ENCODE measurements at regions of chr10 and their contacts with region 1.

Region 1: GRCh38 chr10:26725837-26726727 is 28.6 kb downstream of the PDSS1 start:
- DNase-seq: peak; percentile 31 to 79 (median 70)
- ATAC-seq: peak; percentile 53 to 90 (median 90)
- H3K4me3 ChIP-seq: no peak overlapping the region
- H3K27ac ChIP-seq: no peak overlapping the region
- H3K4me1 ChIP-seq: no peaks in the 10 kb centered on the region
- H3K27me3 ChIP-seq: no peaks in the 10 kb centered on the region
- CTCF ChIP-seq: peak; percentile 57 to 75 (median 68)

Region 2: GRCh38 chr10:25831080-25831479 is 895.0 kb before region 1 on chr10:
- intact Hi-C with region 1: no loop called
- DNase-seq: no peak
- ATAC-seq: peak in 1 of 4 donors; percentile 29
- H3K4me3 ChIP-seq: no peak overlapping the region
- H3K27ac ChIP-seq: no peak overlapping the region
- H3K4me1 ChIP-seq: no peaks in the 10 kb centered on the region
- H3K27me3 ChIP-seq: peaks cover 0 to 9% (median 0%) of the 10 kb centered on the region in 4 donors
- CTCF ChIP-seq: no peak

Region 3: DNA sequence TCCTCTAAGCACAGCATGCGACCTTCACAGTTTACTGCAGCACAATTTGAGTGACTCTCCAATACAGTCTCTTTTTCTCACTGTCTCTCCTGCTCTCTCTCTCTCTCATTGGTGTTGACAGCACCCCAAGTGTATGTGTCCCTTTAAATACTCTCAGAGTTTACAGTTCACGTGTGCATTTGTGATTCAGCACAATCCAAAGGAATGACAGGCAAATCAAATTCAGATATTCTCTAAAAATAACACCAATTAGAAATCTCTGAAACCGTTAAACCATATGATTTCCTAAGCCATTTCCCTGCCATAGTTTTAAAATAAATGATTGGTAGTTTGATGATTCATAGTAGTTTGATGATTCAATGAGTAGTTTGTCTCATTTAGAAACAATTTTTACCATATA is 613.5 kb before region 1 on chr10:
- intact Hi-C with region 1: no loop called
- DNase-seq: no peak
- ATAC-seq: no peak
- H3K4me3 ChIP-seq: no peak overlapping the region
- H3K27ac ChIP-seq: no peak overlapping the region
- H3K4me1 ChIP-seq: no peaks in the 10 kb centered on the region
- H3K27me3 ChIP-seq: peaks cover 0 to 2% (median 0%) of the 10 kb centered on the region in 4 donors
- CTCF ChIP-seq: no peak

Region 4: DNA sequence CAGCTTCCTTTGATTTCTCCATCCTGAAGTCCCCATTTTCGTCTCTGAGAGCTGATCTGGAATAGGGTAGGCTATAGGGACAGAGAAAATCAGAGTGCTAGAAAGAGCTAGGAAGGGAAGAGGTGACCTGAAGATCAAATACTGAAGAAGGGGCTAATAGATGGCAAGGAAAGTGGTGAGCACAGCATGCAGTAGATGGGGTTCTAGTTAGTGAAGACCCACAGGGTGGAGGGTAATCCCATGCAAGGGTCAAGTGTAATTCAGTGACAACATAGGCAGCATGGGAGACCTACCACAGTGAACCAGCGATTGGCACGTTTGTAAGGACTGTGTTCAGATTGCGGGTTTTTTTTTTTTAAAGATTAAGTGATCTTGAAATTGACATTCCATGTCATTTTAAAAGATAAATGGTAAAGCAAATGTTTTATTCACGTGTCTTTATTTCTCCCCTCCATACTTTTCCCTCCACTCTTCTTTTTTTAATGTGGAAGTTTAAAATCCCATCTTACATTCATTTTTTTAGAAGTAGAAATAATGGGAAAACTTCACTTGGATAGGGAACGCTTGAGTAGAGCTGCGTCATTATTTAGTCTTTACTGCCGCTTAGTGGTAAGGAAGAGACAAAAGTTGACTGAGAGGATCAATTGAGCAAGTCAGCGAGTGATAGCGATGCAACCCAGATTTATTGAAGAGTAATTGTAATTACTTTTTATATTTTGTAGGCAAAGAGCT is 155.7 kb after region 1 on chr10:
- intact Hi-C with region 1: loop called (anchors 5 to 10 kb)
- DNase-seq: no peak
- ATAC-seq: peak; percentile 86 to 97 (median 94)
- H3K4me3 ChIP-seq: no peak overlapping the region
- H3K27ac ChIP-seq: no peak overlapping the region
- H3K4me1 ChIP-seq: no peaks in the 10 kb centered on the region
- H3K27me3 ChIP-seq: peaks cover 0 to 6% (median 2%) of the 10 kb centered on the region in 4 donors
- CTCF ChIP-seq: peak in 3 of 4 donors; percentile 38 to 48 (median 48)

Region 5: DNA sequence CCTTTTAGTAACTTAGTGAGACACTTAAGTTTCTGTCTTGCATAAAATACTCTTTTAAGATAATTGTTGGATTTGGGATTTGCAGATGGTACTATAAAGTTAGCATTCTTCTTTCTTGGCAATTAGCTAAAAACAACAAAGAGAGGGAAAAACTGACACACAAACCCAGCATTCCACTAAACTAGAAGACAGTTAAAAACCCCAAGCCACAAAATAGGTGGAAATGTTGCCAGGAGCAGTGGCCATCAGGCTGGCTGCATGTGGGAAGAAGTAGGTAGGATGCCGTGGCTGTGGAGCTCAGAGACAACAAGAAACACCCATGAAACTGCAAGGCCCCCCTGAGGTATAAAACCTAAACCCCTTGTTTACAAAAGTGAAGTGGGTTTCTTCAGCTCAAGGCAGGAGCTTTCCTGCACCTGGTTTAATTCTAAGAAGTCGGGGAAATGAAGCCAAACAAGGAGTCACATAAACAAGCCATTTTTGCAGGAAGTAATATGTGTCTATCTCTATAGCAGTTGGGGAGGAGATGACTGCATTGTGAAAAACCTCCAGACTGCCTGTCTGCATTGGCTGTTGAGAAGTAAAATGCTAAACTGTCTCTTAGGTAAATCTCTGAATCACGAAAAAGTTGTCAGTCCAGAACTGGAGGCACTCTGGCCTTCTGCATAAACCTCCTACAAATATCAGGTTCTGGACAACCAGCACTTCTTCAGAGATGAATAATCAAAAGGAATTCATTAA is 787.5 kb after region 1 on chr10:
- intact Hi-C with region 1: no loop called
- DNase-seq: no peak
- ATAC-seq: no peak
- H3K4me3 ChIP-seq: no peak overlapping the region
- H3K27ac ChIP-seq: no peak overlapping the region
- H3K4me1 ChIP-seq: peaks cover 0 to 10% (median 6%) of the 10 kb centered on the region in 3 donors
- H3K27me3 ChIP-seq: no peaks in the 10 kb centered on the region
- CTCF ChIP-seq: no peak